Activated CD8-positive, alpha-beta memory T cell treated with anti-CD3 and anti-CD28 coated beads, Interleukin-2, amount 10 ng/mL, durations not matched to agents 7 days and 5 days (primary cell): ENCODE measurements at regions of chr11 and their contacts with region 1.

Region 1: GRCh38 chr11:94623120-94623735 is 56.1 kb downstream of the PIWIL4 start:
- DNase-seq: peak; percentile 55
- ATAC-seq: peak; percentile 82
- H3K4me3 Mint-ChIP-seq: no peak overlapping the region
- H3K27ac Mint-ChIP-seq: no peak overlapping the region
- H3K4me1 Mint-ChIP-seq: no peaks in the 10 kb centered on the region
- H3K27me3 Mint-ChIP-seq: peaks cover 6% of the 10 kb centered on the region

Region 2: DNA sequence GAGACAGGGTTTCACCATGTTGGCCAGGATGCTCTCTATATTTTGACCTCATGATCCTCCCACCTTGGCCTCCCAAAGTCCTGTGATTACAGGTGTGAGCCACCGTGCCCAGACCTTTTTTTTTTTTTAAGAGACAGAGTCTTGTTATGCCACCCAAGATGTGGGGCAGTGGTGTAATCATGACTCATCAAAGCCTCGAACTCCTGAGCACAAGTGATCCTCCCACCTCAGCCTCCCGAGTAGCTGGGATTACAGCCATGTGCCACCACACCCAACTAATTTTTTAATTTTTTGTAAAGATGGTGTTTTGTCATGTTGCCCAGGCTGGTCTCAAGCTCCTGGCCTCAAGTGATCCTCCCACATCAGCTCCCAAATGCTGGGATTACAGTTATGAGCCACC is 281.0 kb before region 1 on chr11:
- CTCF ChIA-PET with region 1: no interaction called
- DNase-seq: no peak
- ATAC-seq: no peak
- H3K4me3 Mint-ChIP-seq: no peak overlapping the region
- H3K27ac Mint-ChIP-seq: no peak overlapping the region
- H3K4me1 Mint-ChIP-seq: no peaks in the 10 kb centered on the region
- H3K27me3 Mint-ChIP-seq: peaks cover 4% of the 10 kb centered on the region

Region 3: GRCh38 chr11:94897330-94897768 is 274.1 kb after region 1 on chr11:
- CTCF ChIA-PET with region 1: interaction called, 12 read pairs
- DNase-seq: peak; percentile 53
- ATAC-seq: no peak
- H3K4me3 Mint-ChIP-seq: no peak overlapping the region
- H3K27ac Mint-ChIP-seq: no peak overlapping the region
- H3K4me1 Mint-ChIP-seq: no peaks in the 10 kb centered on the region
- H3K27me3 Mint-ChIP-seq: peaks cover 13% of the 10 kb centered on the region